CD14-positive monocyte (primary cell): ENCODE measurements at regions of chr5 and their contacts with region 1.

Region 1: GRCh38 chr5:119355685-119356611 is at the start of gene TNFAIP8:
- DNase-seq: peak; percentile 62 to 89 (median 68)
- H3K4me3 ChIP-seq: peak within 1 kb of the TSS; percentile 90 to 98 (median 90)
- H3K4me3 Mint-ChIP-seq: peak within 1 kb of the TSS; percentile 99 to 100
- H3K27ac ChIP-seq: peak within 1 kb of the TSS; percentile 92 to 96
- H3K27ac Mint-ChIP-seq: peak within 1 kb of the TSS; percentile 94 to 99 (median 97)
- H3K4me1 ChIP-seq: peaks cover 63 to 68% of the 10 kb centered on the region in 2 donors
- H3K4me1 Mint-ChIP-seq: peaks cover 79% of the 10 kb centered on the region
- H3K27me3 ChIP-seq: no peaks in the 10 kb centered on the region
- H3K27me3 Mint-ChIP-seq: peaks cover 0 to 2% (median 0%) of the 10 kb centered on the region in 3 donors
- CTCF ChIP-seq: no peak
- polyA plus RNA-seq, gene TNFAIP8: 20.6 to 55.5 (median 47.0) TPM

Region 2: GRCh38 chr5:119397518-119398380 is 41.8 kb after region 1 on chr5:
- intact Hi-C with region 1: loop called in 1 of 2 experiments (anchors 5 kb)
- DNase-seq: peak; percentile 59 to 93 (median 80)
- H3K4me3 ChIP-seq: peak overlapping the region; percentile 16 to 68 (median 64)
- H3K4me3 Mint-ChIP-seq: peak overlapping the region; percentile 66 to 87
- H3K27ac ChIP-seq: peak overlapping the region in 1 of 2 donors; percentile 81
- H3K27ac Mint-ChIP-seq: peak overlapping the region; percentile 46 to 86 (median 78)
- H3K4me1 ChIP-seq: peaks cover 18 to 28% of the 10 kb centered on the region in 2 donors
- H3K4me1 Mint-ChIP-seq: peaks cover 46% of the 10 kb centered on the region
- H3K27me3 ChIP-seq: no peaks in the 10 kb centered on the region
- H3K27me3 Mint-ChIP-seq: peaks cover 0 to 3% (median 0%) of the 10 kb centered on the region in 3 donors
- CTCF ChIP-seq: no peak